ENCODE measurements at regions of chr10 and their contacts with region 1.

Region 1: GRCh38 chr10:20776384-20777118 is 120.6 kb downstream of the NEBL start:
- DNase-seq: no peak
- H3K4me3 ChIP-seq: no peak overlapping the region
- H3K27ac ChIP-seq: no peak overlapping the region
- H3K4me1 ChIP-seq: no peaks in the 10 kb centered on the region
- H3K27me3 ChIP-seq: no peaks in the 10 kb centered on the region
- CTCF ChIP-seq: no peak

Region 2: DNA sequence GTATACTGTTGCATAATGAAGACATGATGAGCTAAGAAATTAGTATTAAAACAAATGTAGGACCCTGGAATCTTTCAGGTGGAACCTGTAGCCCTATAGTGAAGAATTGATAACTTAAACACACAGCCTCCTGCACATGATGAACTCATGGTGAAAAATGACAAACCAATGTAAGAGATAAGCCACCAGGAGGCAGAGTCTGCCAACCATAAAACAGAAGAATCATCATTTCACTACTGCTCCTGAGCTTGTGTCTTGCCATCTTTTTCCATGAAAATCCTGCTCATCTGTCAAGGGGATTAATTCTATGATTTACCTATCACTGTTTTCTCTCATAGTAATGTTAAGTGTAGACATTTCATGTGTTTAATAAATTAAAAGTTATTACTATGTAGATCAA is 1364.0 kb before region 1 on chr10:
- CTCF ChIA-PET with region 1: no interaction called
- POLR2A ChIA-PET with region 1: no interaction called
- intact Hi-C with region 1: loop called (anchors 10 kb)
- DNase-seq: peak; percentile 72
- H3K4me3 ChIP-seq: no peak overlapping the region
- H3K27ac ChIP-seq: no peak overlapping the region
- H3K4me1 ChIP-seq: no peaks in the 10 kb centered on the region
- H3K27me3 ChIP-seq: no peaks in the 10 kb centered on the region
- CTCF ChIP-seq: peak; percentile 67